ENCODE measurements at regions of chr11 and their contacts with region 1.

Region 1: GRCh38 chr11:15208378-15209222 is 93.9 kb downstream of the INSC start:
- DNase-seq: peak; percentile 79 to 87 (median 80)
- ATAC-seq: peak; percentile 93 to 95 (median 94)
- H3K4me3 ChIP-seq: no peak overlapping the region
- H3K27ac ChIP-seq: no peak overlapping the region
- H3K4me1 ChIP-seq: peaks cover 0 to 24% (median 0%) of the 10 kb centered on the region in 4 donors
- H3K27me3 ChIP-seq: no peaks in the 10 kb centered on the region
- CTCF ChIP-seq: peak; percentile 88 to 96 (median 92)
- POLR2A ChIP-seq: no peak

Region 2: DNA sequence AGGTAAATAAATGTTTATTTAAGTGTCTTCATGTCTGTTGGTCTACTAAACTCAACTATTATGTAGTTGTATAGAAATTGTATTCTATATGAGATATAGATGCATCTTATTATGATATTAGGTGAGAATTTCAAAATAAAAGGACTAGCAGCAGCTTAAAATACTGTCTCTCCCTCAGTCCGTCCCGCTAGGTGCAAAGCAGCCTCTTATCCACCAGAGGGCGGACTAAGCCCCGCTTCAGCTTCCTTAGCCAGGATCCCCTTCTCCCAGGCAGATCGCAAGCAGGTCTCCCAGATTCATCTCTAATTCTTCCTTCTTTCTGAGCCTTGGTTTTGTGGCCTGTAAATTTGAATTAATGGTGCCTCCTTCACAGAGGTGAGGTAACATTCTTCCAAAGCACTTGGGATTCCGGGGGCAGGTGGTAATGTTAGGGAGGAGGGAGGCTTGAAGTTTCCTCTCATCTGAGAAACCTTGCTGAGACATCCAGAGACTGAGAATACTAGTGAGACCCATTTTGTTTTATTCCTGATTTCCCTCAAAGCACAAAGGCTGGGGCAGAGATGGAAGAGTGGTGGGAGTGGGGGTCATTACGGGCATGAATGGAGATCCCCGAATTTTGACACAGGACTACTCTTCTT is 107.4 kb before region 1 on chr11:
- intact Hi-C with region 1: loop called (anchors 2 to 5 kb)
- DNase-seq: peak; percentile 65 to 76 (median 72)
- ATAC-seq: peak; percentile 98 to 100 (median 98)
- H3K4me3 ChIP-seq: no peak overlapping the region
- H3K27ac ChIP-seq: no peak overlapping the region
- H3K4me1 ChIP-seq: no peaks in the 10 kb centered on the region
- H3K27me3 ChIP-seq: no peaks in the 10 kb centered on the region
- CTCF ChIP-seq: peak; percentile 87 to 97 (median 95)
- POLR2A ChIP-seq: no peak

Region 3: DNA sequence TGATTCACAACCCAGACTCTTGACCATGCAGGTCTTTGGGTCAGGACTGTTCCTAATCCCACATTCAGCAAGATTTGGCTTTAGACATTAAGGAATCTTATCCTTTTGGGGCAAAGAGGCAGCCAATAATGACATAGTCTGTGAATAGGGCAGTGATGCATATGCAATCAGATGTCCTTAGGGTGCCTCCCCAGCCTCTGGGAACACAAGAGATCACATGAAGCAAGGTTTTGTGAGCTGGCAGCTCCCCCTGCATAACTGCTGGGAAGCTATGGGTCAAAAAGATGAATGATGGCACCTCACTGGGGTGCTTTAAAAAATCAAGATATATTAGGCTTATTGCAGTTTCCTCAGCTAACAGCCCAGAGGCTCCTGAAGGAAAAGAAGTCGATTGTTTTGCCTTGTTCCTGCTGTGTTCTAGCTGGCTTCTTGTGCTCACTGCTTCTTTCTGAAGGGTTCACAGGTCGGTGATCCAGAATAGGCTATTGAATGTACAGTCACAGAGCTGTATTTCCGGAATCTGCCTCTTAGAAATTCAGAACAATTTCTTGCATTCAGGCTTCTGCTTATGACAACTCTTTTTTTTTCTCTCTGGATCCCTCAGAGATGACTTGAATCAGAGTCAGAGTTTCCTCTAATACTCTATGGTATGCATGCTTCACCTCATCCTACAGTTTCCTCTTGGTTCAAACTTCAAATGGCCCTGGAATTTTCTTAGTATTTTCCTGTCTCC is 62.2 kb before region 1 on chr11:
- intact Hi-C with region 1: loop called in 1 of 2 experiments (anchors 10 kb)
- DNase-seq: no peak
- ATAC-seq: peak in 1 of 4 donors; percentile 16
- H3K4me3 ChIP-seq: no peak overlapping the region
- H3K27ac ChIP-seq: no peak overlapping the region
- H3K4me1 ChIP-seq: peaks cover 0 to 20% (median 5%) of the 10 kb centered on the region in 4 donors
- H3K27me3 ChIP-seq: no peaks in the 10 kb centered on the region
- CTCF ChIP-seq: no peak
- POLR2A ChIP-seq: no peak

Region 4: GRCh38 chr11:15276621-15277020 is 68.0 kb after region 1 on chr11:
- intact Hi-C with region 1: no loop called
- DNase-seq: no peak
- ATAC-seq: no peak
- H3K4me3 ChIP-seq: no peak overlapping the region
- H3K27ac ChIP-seq: no peak overlapping the region
- H3K4me1 ChIP-seq: no peaks in the 10 kb centered on the region
- H3K27me3 ChIP-seq: no peaks in the 10 kb centered on the region
- CTCF ChIP-seq: peak in 3 of 4 donors; percentile 15 to 24 (median 22)
- POLR2A ChIP-seq: no peak

Measured in right lobe of liver (tissue), 6 donors.